AG04449 (cell line): ENCODE measurements at regions of chr4 and their contacts with region 1.

Region 1: GRCh38 chr4:16001484-16001858 is 38.5 kb upstream of the FGFBP2 start:
- DNase-seq: peak; percentile 14
- H3K4me3 ChIP-seq: no peak overlapping the region
- CTCF ChIP-seq: peak; percentile 87

Region 2: GRCh38 chr4:15479089-15479912 is 522.2 kb before region 1 on chr4:
- CTCF ChIA-PET with region 1: interaction called, 17 read pairs
- POLR2A ChIA-PET with region 1: no interaction called
- DNase-seq: peak; percentile 42
- H3K4me3 ChIP-seq: peak overlapping the region; percentile 68
- CTCF ChIP-seq: peak; percentile 67

Region 3: DNA sequence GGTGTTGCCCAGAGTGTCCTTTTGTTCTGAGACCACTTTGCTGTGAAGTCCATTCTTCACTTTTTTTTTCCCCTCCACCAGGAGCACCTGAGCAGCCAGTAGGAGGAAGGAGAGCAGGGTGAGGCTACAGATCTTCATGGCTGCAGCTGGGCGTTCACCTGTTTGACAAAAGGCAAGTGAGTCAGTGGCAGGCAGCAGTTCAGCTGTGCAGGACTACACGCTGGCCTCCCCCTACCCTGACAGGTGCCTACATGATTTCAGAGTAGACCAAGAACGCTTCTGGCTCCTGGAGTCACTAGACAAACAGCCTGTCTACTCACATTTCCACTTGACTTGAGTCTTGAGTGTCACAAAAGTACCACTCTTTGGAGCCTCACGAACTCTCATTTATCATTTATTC is 65.0 kb before region 1 on chr4:
- CTCF ChIA-PET with region 1: no interaction called
- POLR2A ChIA-PET with region 1: no interaction called
- DNase-seq: no peak
- H3K4me3 ChIP-seq: no peak overlapping the region
- CTCF ChIP-seq: no peak

Region 4: DNA sequence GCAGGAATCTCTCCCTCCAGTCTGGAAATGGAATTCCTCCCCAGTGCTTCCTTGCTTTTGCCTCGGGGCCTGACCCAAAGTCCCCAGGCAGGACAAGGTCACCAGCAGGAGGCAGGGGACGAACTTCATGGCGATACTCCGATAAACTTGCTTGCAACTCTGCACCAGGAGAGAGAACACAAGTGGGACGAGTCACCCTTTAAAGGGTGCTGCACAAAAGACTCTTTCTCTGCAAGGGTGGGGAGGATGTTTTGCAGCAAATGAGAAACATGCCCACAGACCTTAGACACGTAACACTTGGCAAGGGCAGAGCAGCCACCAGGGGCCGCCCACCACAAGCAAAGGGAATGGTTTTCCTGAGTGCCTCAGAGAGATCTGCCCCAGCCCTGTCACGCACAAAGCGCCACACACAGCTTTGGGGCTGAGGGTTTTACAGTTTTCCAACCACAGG is 38.4 kb before region 1 on chr4 and contains the start of gene FGFBP2:
- CTCF ChIA-PET with region 1: interaction called, 96 read pairs
- POLR2A ChIA-PET with region 1: no interaction called
- DNase-seq: peak; percentile 5
- H3K4me3 ChIP-seq: no peak within 1 kb of the TSS
- CTCF ChIP-seq: peak; percentile 79

Region 5: GRCh38 chr4:15976456-15977447 is 24.7 kb before region 1 on chr4:
- CTCF ChIA-PET with region 1: interaction called, 21 read pairs
- POLR2A ChIA-PET with region 1: no interaction called
- DNase-seq: no peak
- H3K4me3 ChIP-seq: no peak overlapping the region
- CTCF ChIP-seq: no peak

Region 6: GRCh38 chr4:15982842-15983524 is 18.5 kb before region 1 on chr4:
- CTCF ChIA-PET with region 1: interaction called, 21 read pairs
- POLR2A ChIA-PET with region 1: no interaction called
- DNase-seq: no peak
- H3K4me3 ChIP-seq: no peak overlapping the region
- CTCF ChIP-seq: no peak

Region 7: GRCh38 chr4:15990570-15991285 is 10.7 kb before region 1 on chr4:
- CTCF ChIA-PET with region 1: interaction called, 17 read pairs
- POLR2A ChIA-PET with region 1: no interaction called
- DNase-seq: no peak
- H3K4me3 ChIP-seq: no peak overlapping the region
- CTCF ChIP-seq: no peak

Region 8: DNA sequence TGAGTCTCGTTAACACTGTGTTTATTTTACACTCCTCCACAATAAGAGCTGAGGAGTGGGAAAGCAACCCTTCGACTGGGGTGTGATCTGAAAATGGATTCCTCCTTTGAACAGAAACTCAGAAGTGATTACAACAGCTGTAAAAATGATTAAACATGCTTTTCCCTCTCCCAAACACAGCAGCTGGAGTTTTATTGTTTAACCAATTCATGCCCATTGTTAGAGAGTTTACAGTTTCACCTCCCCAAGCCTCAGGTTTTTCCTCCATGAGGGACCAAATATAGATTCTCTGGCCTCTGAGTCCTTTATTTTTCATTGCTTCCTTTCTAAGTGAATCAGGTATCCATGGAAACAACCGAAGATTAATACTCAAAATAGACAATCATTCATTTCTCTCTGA is 487.8 kb after region 1 on chr4:
- CTCF ChIA-PET with region 1: no interaction called
- POLR2A ChIA-PET with region 1: no interaction called
- DNase-seq: no peak
- H3K4me3 ChIP-seq: no peak overlapping the region
- CTCF ChIP-seq: no peak